K562 (cell line): ENCODE measurements at regions of chr6 and their contacts with region 1.

Region 1: DNA sequence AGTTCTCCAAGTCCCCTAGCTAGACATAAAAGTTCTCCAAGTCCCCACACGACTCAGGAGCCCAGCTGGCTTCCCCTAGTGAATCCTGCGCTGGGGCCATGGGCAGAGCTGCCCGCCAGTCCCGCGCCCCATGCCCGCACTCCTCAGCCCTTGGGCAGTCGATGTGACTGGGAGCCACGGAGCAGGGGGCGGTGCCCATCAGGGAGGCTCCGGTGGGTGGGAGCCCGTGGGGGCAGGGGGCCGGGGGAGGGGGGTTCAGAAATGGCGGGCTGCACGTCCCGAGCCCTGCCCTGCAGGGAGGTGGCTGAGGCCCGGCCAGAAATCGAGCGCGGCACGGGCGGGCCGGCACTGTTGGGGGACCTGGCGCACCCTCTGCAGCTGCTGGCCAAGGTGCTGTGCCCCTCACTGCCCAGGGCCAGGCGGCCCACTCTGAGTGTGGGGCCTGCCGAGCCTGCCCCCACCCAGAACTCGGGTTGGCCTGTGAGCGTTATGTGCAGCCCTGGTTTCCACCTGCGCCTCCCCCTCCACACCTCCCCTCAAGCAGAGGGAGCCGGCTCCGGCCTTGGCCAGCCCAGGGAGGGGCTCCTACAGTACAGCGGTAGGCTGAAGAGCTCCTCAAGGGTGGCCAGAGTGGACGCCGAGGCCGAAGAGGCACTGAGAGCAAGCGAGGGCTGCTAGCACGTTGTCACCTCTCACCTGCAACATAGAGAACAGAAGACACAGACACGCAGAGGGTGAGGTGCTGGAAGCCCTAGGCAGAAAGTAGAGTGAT is 11.4 kb downstream of the GSTA5 start:
- DNase-seq: no peak
- ATAC-seq: no peak
- H3K4me3 ChIP-seq: no peak overlapping the region
- H3K27ac ChIP-seq: no peak overlapping the region
- H3K4me1 ChIP-seq: no peaks in the 10 kb centered on the region; a peak in 1 of 5 replicates
- H3K27me3 ChIP-seq: peaks cover 0 to 13% of the 10 kb centered on the region in 2 experiments; a peak in 1 of 5 replicates
- CTCF ChIP-seq: no peak
- EP300 ChIP-seq: no peak
- POLR2A ChIP-seq: no peak
- RAD21 ChIP-seq: no peak

Region 2: DNA sequence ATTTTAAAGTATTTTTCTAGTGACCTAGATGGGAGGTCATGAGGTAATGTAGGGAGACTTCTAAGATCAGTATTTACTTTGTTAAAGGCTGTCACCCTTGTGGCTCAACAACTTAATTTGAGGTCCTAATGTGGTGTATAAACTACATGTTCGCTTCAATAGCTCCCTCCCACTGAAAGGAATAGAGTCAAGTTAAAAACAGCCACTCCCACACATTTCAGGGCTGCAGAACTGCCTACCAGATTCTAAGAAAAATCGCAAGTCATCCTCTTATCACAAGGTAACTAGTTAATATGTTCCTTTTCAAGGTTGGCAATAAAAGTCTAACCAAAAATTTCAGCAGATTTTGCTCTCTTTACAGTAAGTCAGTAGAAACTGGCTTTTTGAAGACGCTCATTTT is 40.8 kb before region 1 on chr6:
- CTCF ChIA-PET with region 1: no interaction called
- POLR2A ChIA-PET with region 1: no interaction called
- in situ Hi-C with region 1: loop called (anchors 5 kb)
- intact Hi-C with region 1: loop called (anchors 1 kb)
- DNase-seq: peak in 1 of 4 experiments; percentile 36
- ATAC-seq: peak; percentile 54; the same call in 2 of the 3 replicates
- H3K4me3 ChIP-seq: no peak overlapping the region
- H3K27ac ChIP-seq: no peak overlapping the region
- H3K4me1 ChIP-seq: peaks cover 0 to 7% of the 10 kb centered on the region in 2 experiments; a peak in 3 of 5 replicates
- H3K27me3 ChIP-seq: no peaks in the 10 kb centered on the region
- CTCF ChIP-seq: no peak
- EP300 ChIP-seq: no peak
- POLR2A ChIP-seq: no peak
- RAD21 ChIP-seq: no peak

Region 3: GRCh38 chr6:53020005-53020744 is 190.9 kb after region 1 on chr6:
- CTCF ChIA-PET with region 1: no interaction called
- POLR2A ChIA-PET with region 1: no interaction called
- in situ Hi-C with region 1: no loop called
- intact Hi-C with region 1: no loop called
- DNase-seq: peak; percentile 17 to 78 (median 44)
- ATAC-seq: peak; percentile 94
- H3K4me3 ChIP-seq: no peak overlapping the region
- H3K27ac ChIP-seq: no peak overlapping the region
- H3K4me1 ChIP-seq: peaks cover 0 to 7% of the 10 kb centered on the region in 2 experiments; a peak in 1 of 5 replicates
- H3K27me3 ChIP-seq: no peaks in the 10 kb centered on the region
- CTCF ChIP-seq: no peak
- EP300 ChIP-seq: no peak
- POLR2A ChIP-seq: no peak
- RAD21 ChIP-seq: no peak